ENCODE measurements at regions of chr14 and their contacts with region 1.

Region 1: GRCh38 chr14:21103710-21104447 is 3.0 kb downstream of the TMEM253 start:
- DNase-seq: peak; percentile 76
- ATAC-seq: peak; percentile 93
- H3K4me3 ChIP-seq: peak overlapping the region; percentile 76
- H3K27ac ChIP-seq: peak overlapping the region; percentile 92
- H3K4me1 ChIP-seq: peaks cover 22% of the 10 kb centered on the region
- H3K27me3 ChIP-seq: no peaks in the 10 kb centered on the region; a peak in 1 of 4 replicates
- CTCF ChIP-seq: peak; percentile 83 to 84 (median 83)
- EP300 ChIP-seq: peak in 1 of 2 experiments; percentile 35; a peak in 1 of 4 replicates
- POLR2A ChIP-seq: peak; percentile 98
- RAD21 ChIP-seq: 0 out of 2 replicates have a peak, but pooled peaks have one; percentile 21

Region 2: GRCh38 chr14:21003788-21004346 is 100.0 kb before region 1 on chr14:
- CTCF ChIA-PET with region 1: interaction called, 19 read pairs
- POLR2A ChIA-PET with region 1: no interaction called
- RAD21 ChIA-PET with region 1: interaction called, 6 read pairs
- SMC1A ChIA-PET with region 1: interaction called, 5 read pairs
- in situ Hi-C with region 1: no loop called
- intact Hi-C with region 1: no loop called
- DNase-seq: no peak
- ATAC-seq: no peak
- H3K4me3 ChIP-seq: no peak overlapping the region
- H3K27ac ChIP-seq: no peak overlapping the region
- H3K4me1 ChIP-seq: no peaks in the 10 kb centered on the region
- H3K27me3 ChIP-seq: no peaks in the 10 kb centered on the region
- CTCF ChIP-seq: no peak
- EP300 ChIP-seq: no peak
- POLR2A ChIP-seq: no peak
- RAD21 ChIP-seq: no peak

Region 3: GRCh38 chr14:21032326-21033132 is 71.3 kb before region 1 on chr14:
- CTCF ChIA-PET with region 1: interaction called, 11 read pairs
- POLR2A ChIA-PET with region 1: no interaction called
- RAD21 ChIA-PET with region 1: no interaction called
- SMC1A ChIA-PET with region 1: interaction called, 3 read pairs
- in situ Hi-C with region 1: no loop called
- intact Hi-C with region 1: no loop called
- DNase-seq: no peak
- ATAC-seq: no peak
- H3K4me3 ChIP-seq: no peak overlapping the region
- H3K27ac ChIP-seq: no peak overlapping the region
- H3K4me1 ChIP-seq: peaks cover 8% of the 10 kb centered on the region
- H3K27me3 ChIP-seq: peaks cover 0 to 9% of the 10 kb centered on the region in 2 experiments; a peak in 2 of 4 replicates
- CTCF ChIP-seq: no peak
- EP300 ChIP-seq: no peak
- POLR2A ChIP-seq: no peak
- RAD21 ChIP-seq: no peak

Region 4: DNA sequence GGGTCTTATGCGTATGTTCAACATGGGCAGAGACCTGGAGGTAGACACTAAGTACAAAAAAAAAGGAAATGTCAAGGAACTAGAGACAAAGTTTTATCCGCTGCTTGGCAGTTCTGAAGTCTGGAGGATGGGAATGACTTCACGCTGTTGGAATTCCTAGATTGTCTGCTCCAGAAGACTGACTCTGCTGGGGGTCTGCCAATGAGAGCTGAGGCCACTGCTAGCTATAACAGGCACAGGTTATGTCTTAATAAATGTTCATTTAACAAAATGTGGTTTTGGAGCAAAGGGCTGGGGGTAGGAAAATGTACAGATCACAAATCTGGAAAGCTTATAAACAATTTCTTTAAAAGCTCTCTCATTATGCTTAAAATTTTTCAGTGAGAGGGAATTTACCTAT is 40.4 kb before region 1 on chr14:
- CTCF ChIA-PET with region 1: interaction called, 151 read pairs
- POLR2A ChIA-PET with region 1: no interaction called
- RAD21 ChIA-PET with region 1: interaction called, 55 read pairs
- SMC1A ChIA-PET with region 1: interaction called, 38 read pairs
- in situ Hi-C with region 1: no loop called
- intact Hi-C with region 1: no loop called
- DNase-seq: no peak
- ATAC-seq: no peak
- H3K4me3 ChIP-seq: no peak overlapping the region
- H3K27ac ChIP-seq: no peak overlapping the region
- H3K4me1 ChIP-seq: no peaks in the 10 kb centered on the region
- H3K27me3 ChIP-seq: peaks cover 0 to 1% of the 10 kb centered on the region in 2 experiments; a peak in 2 of 4 replicates
- CTCF ChIP-seq: no peak
- EP300 ChIP-seq: no peak
- POLR2A ChIP-seq: no peak
- RAD21 ChIP-seq: no peak

Region 5: GRCh38 chr14:21084988-21085853 is 18.7 kb before region 1 on chr14:
- CTCF ChIA-PET with region 1: interaction called, 61 read pairs
- POLR2A ChIA-PET with region 1: no interaction called
- RAD21 ChIA-PET with region 1: interaction called, 11 read pairs
- SMC1A ChIA-PET with region 1: interaction called, 4 read pairs
- in situ Hi-C with region 1: no loop called
- intact Hi-C with region 1: no loop called
- DNase-seq: no peak
- ATAC-seq: no peak
- H3K4me3 ChIP-seq: no peak overlapping the region
- H3K27ac ChIP-seq: no peak overlapping the region
- H3K4me1 ChIP-seq: no peaks in the 10 kb centered on the region
- H3K27me3 ChIP-seq: peaks cover 0 to 2% of the 10 kb centered on the region in 2 experiments; a peak in 1 of 4 replicates
- CTCF ChIP-seq: no peak
- EP300 ChIP-seq: no peak
- POLR2A ChIP-seq: no peak
- RAD21 ChIP-seq: no peak

Region 6: GRCh38 chr14:21136024-21136423 is 32.1 kb after region 1 on chr14:
- CTCF ChIA-PET with region 1: interaction called, 19 read pairs
- POLR2A ChIA-PET with region 1: no interaction called
- RAD21 ChIA-PET with region 1: interaction called, 3 read pairs
- SMC1A ChIA-PET with region 1: interaction called, 7 read pairs
- in situ Hi-C with region 1: no loop called
- intact Hi-C with region 1: no loop called
- DNase-seq: no peak
- ATAC-seq: peak; percentile 44; the same call in 1 of the 3 replicates
- H3K4me3 ChIP-seq: no peak overlapping the region
- H3K27ac ChIP-seq: no peak overlapping the region
- H3K4me1 ChIP-seq: no peaks in the 10 kb centered on the region
- H3K27me3 ChIP-seq: no peaks in the 10 kb centered on the region
- CTCF ChIP-seq: peak; percentile 53 to 57 (median 55)
- EP300 ChIP-seq: no peak
- POLR2A ChIP-seq: no peak
- RAD21 ChIP-seq: peak; percentile 56